Caco-2 (cell line): ENCODE measurements at regions of chr21 and their contacts with region 1.

Region 1: GRCh38 chr21:39313571-39314142 is at the start of gene BRWD1:
- DNase-seq: peak; percentile 90 to 92
- H3K4me3 ChIP-seq: peak within 1 kb of the TSS; percentile 86
- H3K4me3 Mint-ChIP-seq: peak within 1 kb of the TSS; percentile 97
- H3K27ac Mint-ChIP-seq: peak within 1 kb of the TSS; percentile 89
- H3K4me1 ChIP-seq: peaks cover 26% of the 10 kb centered on the region
- H3K4me1 Mint-ChIP-seq: peaks cover 21% of the 10 kb centered on the region
- H3K27me3 ChIP-seq: no peaks in the 10 kb centered on the region
- H3K27me3 Mint-ChIP-seq: no peaks in the 10 kb centered on the region
- CTCF ChIP-seq: peak; percentile 28 to 29
- total RNA-seq, gene BRWD1: 37.1 and 42.2 TPM in 2 replicates

Region 2: DNA sequence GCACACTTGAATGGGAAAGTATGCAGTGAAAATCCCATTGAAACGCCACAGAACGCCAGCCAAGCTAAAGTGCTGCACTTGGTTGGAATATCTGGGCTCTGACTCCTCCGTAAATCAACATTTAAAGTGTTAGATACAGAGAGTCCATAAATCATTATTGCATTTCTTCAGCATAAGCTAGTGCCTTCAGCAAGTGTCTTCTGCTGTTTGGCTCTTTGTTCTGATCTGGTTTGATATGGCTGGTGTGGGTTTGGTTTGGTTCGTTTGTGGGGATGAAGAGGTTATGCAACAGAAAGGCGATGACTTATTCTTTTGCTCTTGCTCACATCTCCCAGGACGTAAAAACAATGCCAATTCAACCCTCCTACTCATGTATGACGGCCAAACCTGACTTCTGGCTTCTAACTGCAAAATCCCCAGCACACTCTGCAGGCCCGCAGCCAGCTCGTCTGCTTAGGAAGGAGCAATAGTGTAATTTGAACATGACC is 693.6 kb before region 1 on chr21:
- CTCF ChIA-PET with region 1: no interaction called
- POLR2A ChIA-PET with region 1: no interaction called
- intact Hi-C with region 1: no loop called
- DNase-seq: no peak
- H3K4me3 ChIP-seq: no peak overlapping the region
- H3K4me3 Mint-ChIP-seq: no peak overlapping the region
- H3K27ac Mint-ChIP-seq: no peak overlapping the region
- H3K4me1 ChIP-seq: no peaks in the 10 kb centered on the region
- H3K4me1 Mint-ChIP-seq: no peaks in the 10 kb centered on the region
- H3K27me3 ChIP-seq: no peaks in the 10 kb centered on the region
- H3K27me3 Mint-ChIP-seq: peaks cover 3% of the 10 kb centered on the region
- CTCF ChIP-seq: no peak

Region 3: GRCh38 chr21:39330001-39330400 is 16.3 kb after region 1 on chr21:
- CTCF ChIA-PET with region 1: no interaction called
- POLR2A ChIA-PET with region 1: no interaction called
- intact Hi-C with region 1: loop called (anchors 2 kb)
- DNase-seq: no peak
- H3K4me3 ChIP-seq: no peak overlapping the region
- H3K4me3 Mint-ChIP-seq: no peak overlapping the region
- H3K27ac Mint-ChIP-seq: no peak overlapping the region
- H3K4me1 ChIP-seq: peaks cover 13% of the 10 kb centered on the region
- H3K4me1 Mint-ChIP-seq: peaks cover 7% of the 10 kb centered on the region
- H3K27me3 ChIP-seq: no peaks in the 10 kb centered on the region
- H3K27me3 Mint-ChIP-seq: no peaks in the 10 kb centered on the region
- CTCF ChIP-seq: no peak